Activated CD4-positive, alpha-beta T cell treated with anti-CD3 and anti-CD28 coated beads, Interleukin-2, amount 10 ng/mL, durations not matched to agents 24 days and 14 days (primary cell): ENCODE measurements at regions of chr11 and their contacts with region 1.

Region 1: DNA sequence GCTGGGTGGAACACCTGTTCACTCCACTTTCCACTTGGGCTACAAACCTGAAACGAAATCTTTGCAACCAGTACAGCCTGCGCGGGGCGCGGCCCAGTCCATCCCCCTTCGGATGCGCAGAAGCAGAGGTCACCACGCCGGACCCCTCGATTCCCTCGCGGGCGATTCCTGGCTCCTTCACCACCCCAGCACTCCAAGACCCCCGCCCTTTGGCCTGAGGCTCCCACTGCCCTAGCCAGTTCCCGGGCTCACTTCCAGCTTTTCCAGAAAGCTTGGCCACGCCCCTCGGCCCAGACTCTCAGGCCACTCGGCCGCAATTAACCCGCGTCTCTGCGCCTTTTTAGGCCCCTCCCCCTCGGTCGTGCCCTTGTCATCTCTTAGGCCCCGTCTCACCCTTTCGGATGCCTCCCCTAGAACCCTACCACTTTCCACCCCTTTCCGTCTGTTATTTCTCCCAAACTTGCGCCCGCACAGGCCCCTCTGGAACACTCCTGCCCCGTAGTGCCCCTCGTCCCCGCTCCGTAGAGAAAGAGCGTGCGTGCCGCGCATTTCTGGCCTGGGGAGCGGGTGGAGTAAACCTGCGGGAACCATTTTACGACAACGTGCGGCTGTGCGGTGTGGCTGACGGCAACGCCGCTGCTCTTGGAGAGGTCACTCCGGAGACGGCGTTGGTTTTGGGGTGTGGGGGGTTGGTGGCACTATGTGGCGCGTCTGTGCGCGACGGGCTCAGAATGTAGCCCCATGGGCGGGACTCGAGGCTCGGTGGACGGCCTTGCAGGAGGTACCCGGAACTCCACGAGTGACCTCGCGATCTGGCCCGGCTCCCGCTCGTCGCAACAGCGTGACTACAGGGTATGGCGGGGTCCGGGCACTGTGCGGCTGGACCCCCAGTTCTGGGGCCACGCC is at the start of gene DLAT:
- DNase-seq: peak; percentile 96
- H3K4me3 Mint-ChIP-seq: peak within 1 kb of the TSS; percentile 100
- H3K27ac Mint-ChIP-seq: peak within 1 kb of the TSS; percentile 100
- H3K4me1 Mint-ChIP-seq: peaks cover 16% of the 10 kb centered on the region
- H3K27me3 Mint-ChIP-seq: no peaks in the 10 kb centered on the region
- total RNA-seq, gene DLAT: 59.2 and 61.8 TPM in 2 replicates

Region 2: DNA sequence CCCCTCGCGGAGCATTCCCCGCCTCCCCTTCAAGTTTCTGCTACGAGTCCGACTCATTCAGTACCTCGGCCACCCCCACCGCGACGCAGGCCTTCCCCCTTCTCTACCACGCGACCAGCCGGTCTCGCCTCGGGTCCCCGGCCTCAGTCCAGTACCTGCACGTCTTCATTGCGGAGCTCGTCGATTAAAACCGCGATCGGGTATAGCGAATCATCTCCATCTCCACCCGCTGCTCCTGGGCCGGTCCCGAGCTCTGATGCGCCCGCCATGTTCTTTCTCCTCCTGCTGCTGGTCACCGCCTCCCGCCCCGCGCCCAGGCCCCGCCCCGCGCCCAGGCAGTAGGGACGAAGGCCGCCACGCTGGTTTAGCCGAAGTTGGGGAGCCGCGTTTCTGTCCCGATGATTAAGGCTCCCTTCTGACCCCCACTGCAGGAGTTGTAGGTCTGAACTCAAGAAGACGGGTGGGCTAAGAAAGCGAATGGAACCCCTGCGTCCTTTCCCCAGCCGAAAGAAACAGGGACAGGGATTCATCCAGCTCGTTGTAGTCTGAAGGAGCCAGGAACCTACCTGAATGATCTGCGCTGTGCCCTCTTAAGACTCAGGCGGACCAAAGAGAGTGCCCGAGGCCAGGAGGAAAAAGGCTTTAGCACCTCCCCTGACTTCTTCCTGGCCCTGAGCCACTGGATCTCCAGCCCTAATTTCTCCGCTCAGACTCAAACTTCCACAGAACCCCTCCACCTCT is 258.8 kb before region 1 on chr11 and contains the start of gene PPP2R1B:
- intact Hi-C with region 1: loop called (anchors 1 kb)
- DNase-seq: peak; percentile 91
- H3K4me3 Mint-ChIP-seq: peak within 1 kb of the TSS; percentile 85
- H3K27ac Mint-ChIP-seq: peak within 1 kb of the TSS; percentile 98
- H3K4me1 Mint-ChIP-seq: peaks cover 31% of the 10 kb centered on the region
- H3K27me3 Mint-ChIP-seq: no peaks in the 10 kb centered on the region
- total RNA-seq, gene PPP2R1B: 63.2 and 63.6 TPM in 2 replicates

Region 3: DNA sequence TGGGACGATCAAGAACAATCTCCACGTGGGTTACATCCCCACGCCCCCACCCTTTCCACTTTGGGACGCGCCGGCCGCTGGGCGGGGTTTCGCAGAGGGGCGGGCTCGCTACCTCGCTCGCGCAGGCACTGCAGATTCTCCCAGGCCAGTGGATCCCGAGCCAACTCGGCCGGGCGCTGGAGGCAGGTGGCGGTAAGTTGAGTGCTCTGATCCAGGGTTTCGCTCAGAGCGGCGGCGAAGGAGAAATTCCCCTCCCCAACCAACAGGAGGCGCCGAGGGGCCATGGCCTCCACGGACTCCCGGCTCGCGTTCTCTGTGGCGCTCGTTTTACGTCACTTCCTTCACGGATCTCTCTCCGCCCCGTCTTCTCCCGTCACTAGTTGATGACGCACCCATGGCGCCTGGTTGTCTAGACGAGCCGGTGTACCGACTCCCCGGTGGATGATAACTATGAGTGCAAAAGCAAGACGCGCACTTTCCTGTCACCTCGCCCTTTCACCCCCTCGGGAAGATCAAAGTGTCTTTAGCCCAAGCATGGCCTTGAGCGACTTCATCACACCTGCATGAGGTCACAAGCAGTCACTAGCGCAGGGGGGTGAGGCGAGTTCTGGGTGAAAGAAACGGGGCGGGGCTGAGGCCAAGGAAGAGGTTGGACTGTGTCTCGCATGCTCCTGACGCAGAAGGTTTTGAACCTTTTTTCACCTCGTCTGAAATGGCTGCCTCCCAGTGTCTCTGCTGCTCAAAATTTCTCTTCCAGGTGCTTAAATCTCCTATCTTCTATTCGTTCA is 146.0 kb before region 1 on chr11 and contains the starts of genes CFAP68 and FDXACB1:
- intact Hi-C with region 1: loop called (anchors 2 kb)
- DNase-seq: peak; percentile 98
- H3K4me3 Mint-ChIP-seq: peak within 1 kb of the TSS; percentile 95
- H3K27ac Mint-ChIP-seq: peak within 1 kb of the TSS; percentile 99
- H3K4me1 Mint-ChIP-seq: peaks cover 10% of the 10 kb centered on the region
- H3K27me3 Mint-ChIP-seq: no peaks in the 10 kb centered on the region
- total RNA-seq, gene CFAP68: 22.6 and 25.5 TPM in 2 replicates
- total RNA-seq, gene FDXACB1: 8.8 and 10.0 TPM in 2 replicates

Region 4: GRCh38 chr11:111982019-111982464 is 43.0 kb before region 1 on chr11:
- intact Hi-C with region 1: loop called (anchors 5 kb)
- DNase-seq: peak; percentile 85
- H3K4me3 Mint-ChIP-seq: no peak overlapping the region
- H3K27ac Mint-ChIP-seq: no peak overlapping the region
- H3K4me1 Mint-ChIP-seq: peaks cover 7% of the 10 kb centered on the region
- H3K27me3 Mint-ChIP-seq: peaks cover 3% of the 10 kb centered on the region

Region 5: DNA sequence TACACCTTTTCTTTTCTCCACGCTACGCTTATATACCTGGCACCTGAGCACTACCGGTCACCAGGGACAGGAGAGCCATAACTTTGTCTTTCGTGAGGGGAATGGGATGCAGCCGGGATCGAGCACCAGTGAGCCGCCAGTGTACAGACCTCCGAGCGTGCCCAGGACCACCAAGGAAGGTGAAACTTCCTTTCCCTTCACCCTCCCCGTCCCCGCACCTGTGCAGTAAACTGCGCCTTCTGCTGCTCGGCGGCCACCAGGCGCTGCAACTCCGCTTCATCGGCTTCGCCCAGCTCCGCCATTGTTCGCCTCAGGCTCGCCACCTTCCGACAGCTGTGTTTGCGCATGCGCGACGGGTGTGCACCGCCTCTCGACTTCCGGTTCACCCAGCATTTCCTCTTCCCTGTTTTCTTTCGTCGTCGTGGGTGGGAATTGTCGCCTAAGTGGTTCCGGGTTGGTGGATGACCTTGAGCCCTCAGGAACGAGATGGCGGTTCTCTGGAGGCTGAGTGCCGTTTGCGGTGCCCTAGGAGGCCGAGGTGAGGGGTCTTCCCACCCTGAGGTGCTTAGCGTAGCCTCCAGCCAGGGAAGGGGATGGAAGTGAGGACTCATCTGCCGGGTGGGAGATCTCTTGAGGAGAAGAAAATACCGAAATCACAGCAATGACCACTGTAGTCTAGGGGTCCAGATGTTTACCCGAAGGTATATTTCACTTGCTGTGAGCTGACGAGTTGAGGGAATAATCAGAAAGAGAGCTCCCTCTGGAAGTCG is 61.6 kb after region 1 on chr11 and contains the starts of genes SDHD and TIMM8B:
- intact Hi-C with region 1: loop called (anchors 5 kb)
- DNase-seq: peak; percentile 99
- H3K4me3 Mint-ChIP-seq: peak within 1 kb of the TSS; percentile 100
- H3K27ac Mint-ChIP-seq: peak within 1 kb of the TSS; percentile 99
- H3K4me1 Mint-ChIP-seq: peaks cover 52% of the 10 kb centered on the region
- H3K27me3 Mint-ChIP-seq: peaks cover 2% of the 10 kb centered on the region
- total RNA-seq, gene SDHD: 95.2 and 101 TPM in 2 replicates
- total RNA-seq, gene TIMM8B: 86.3 and 89.7 TPM in 2 replicates